ENCODE measurements at regions of chr16 and their contacts with region 1.

Region 1: DNA sequence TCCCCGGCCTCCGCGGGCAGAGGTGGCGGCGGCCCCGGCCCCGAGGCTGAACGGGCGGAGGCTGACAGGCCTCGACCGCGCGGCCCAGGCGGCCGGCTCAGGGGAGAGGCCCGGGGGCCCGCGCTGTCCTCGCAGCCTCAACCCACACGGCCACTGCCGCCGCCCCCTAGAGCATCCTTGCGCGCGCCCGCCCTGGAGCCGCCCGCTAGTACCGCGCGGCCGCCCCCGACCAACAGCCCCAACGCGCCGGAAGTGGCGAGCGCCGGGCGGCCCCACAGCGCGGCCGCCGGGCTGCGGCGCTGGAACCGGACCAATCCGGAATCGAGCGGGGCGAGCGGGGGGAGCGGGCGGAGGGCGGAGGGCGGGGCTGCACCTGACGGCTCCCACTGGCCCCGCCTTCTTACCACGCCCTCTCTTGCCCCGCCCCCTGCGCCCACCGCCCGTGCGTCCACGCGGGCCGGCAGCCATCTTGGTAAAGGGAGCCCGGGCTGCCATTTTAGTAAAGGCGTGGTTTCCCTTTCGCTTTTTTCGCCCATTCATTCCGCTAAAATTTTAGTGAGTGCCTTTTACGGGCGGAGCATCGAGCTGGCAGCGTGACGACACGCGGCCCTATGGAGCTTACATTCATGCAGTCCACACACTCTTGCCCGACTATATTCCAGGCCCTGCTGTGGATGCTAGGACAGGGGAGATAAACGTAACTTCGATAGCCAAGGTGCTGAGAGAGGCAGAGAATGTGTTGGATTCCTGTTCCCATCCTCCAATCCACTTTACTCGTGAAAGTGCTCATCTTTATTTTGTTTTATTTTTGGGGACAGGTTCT is at the start of gene XPO6:
- DNase-seq: peak; percentile 97 to 99 (median 98)
- H3K4me3 ChIP-seq: peak within 1 kb of the TSS; percentile 66
- H3K4me3 Mint-ChIP-seq: peak within 1 kb of the TSS; percentile 86 to 96 (median 93)
- H3K27ac ChIP-seq: peak within 1 kb of the TSS; percentile 57
- H3K27ac Mint-ChIP-seq: peak within 1 kb of the TSS; percentile 82 to 95 (median 90)
- H3K4me1 ChIP-seq: peaks cover 38% of the 10 kb centered on the region
- H3K4me1 Mint-ChIP-seq: peaks cover 31 to 41% (median 34%) of the 10 kb centered on the region in 3 donors
- H3K27me3 ChIP-seq: no peaks in the 10 kb centered on the region
- H3K27me3 Mint-ChIP-seq: no peaks in the 10 kb centered on the region
- total RNA-seq, gene XPO6: 228 to 234 TPM

Region 2: GRCh38 chr16:28175715-28176114 is 36.2 kb before region 1 on chr16:
- CTCF ChIA-PET with region 1: interaction called, 10 read pairs
- POLR2A ChIA-PET with region 1: interaction called, 3 read pairs
- DNase-seq: no peak
- H3K4me3 ChIP-seq: no peak overlapping the region
- H3K4me3 Mint-ChIP-seq: no peak overlapping the region
- H3K27ac ChIP-seq: no peak overlapping the region
- H3K27ac Mint-ChIP-seq: peak overlapping the region in 6 of 8 donors; percentile 4 to 87 (median 76)
- H3K4me1 ChIP-seq: peaks cover 51% of the 10 kb centered on the region
- H3K4me1 Mint-ChIP-seq: peaks cover 59 to 86% (median 75%) of the 10 kb centered on the region in 3 donors
- H3K27me3 ChIP-seq: no peaks in the 10 kb centered on the region
- H3K27me3 Mint-ChIP-seq: no peaks in the 10 kb centered on the region

Region 3: GRCh38 chr16:28193530-28194423 is 18.1 kb before region 1 on chr16:
- CTCF ChIA-PET with region 1: interaction called, 34 read pairs
- POLR2A ChIA-PET with region 1: interaction called, 25 read pairs
- DNase-seq: peak in 4 of 5 donors; percentile 13 to 54 (median 21)
- H3K4me3 ChIP-seq: peak overlapping the region; percentile 52
- H3K4me3 Mint-ChIP-seq: peak overlapping the region; percentile 47 to 86 (median 81)
- H3K27ac ChIP-seq: peak overlapping the region; percentile 69
- H3K27ac Mint-ChIP-seq: peak overlapping the region; percentile 97 to 99 (median 98)
- H3K4me1 ChIP-seq: peaks cover 68% of the 10 kb centered on the region
- H3K4me1 Mint-ChIP-seq: peaks cover 78 to 95% (median 82%) of the 10 kb centered on the region in 3 donors
- H3K27me3 ChIP-seq: no peaks in the 10 kb centered on the region
- H3K27me3 Mint-ChIP-seq: peaks cover 0 to under 1% of the 10 kb centered on the region in 2 donors

Region 4: GRCh38 chr16:28255838-28256237 is 43.9 kb after region 1 on chr16:
- CTCF ChIA-PET with region 1: no interaction called
- POLR2A ChIA-PET with region 1: no interaction called
- DNase-seq: no peak
- H3K4me3 ChIP-seq: no peak overlapping the region
- H3K4me3 Mint-ChIP-seq: no peak overlapping the region
- H3K27ac ChIP-seq: no peak overlapping the region
- H3K27ac Mint-ChIP-seq: peak overlapping the region in 1 of 8 donors; percentile 90
- H3K4me1 ChIP-seq: peaks cover 12% of the 10 kb centered on the region
- H3K4me1 Mint-ChIP-seq: peaks cover 9 to 14% (median 13%) of the 10 kb centered on the region in 3 donors
- H3K27me3 ChIP-seq: no peaks in the 10 kb centered on the region
- H3K27me3 Mint-ChIP-seq: peaks cover 1 to 3% of the 10 kb centered on the region in 2 donors

Measured in CD8-positive, alpha-beta memory T cell (primary cell).